ENCODE measurements at regions of chr6 and their contacts with region 1.

Region 1: DNA sequence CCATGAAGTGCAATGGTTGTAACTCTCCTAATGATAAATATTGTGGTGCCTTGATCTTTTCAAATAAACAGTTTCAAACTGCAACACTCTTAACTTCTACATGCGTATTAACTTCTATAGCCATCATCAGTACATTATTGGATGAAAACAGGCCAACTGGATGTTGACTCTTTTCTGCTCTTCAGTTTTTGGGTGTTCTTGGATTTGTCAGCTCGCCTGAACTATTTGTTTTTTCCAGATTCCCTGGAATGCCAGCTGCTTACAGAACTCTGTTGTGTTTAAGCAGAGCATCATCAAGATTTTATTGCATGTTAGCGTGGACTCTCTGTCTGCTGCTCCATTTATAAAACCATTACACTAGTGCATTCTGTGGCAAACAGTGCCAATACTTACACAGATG is 626.1 kb downstream of the HDGFL1 start:
- DNase-seq: no peak

Region 2: GRCh38 chr6:23173234-23173633 is 22.3 kb before region 1 on chr6:
- intact Hi-C with region 1: loop called in 1 of 2 experiments (anchors 1 kb)
- DNase-seq: no peak

Measured in posterior vena cava (tissue), 2 donors.